Vagina (tissue), 2 donors: ENCODE measurements at regions of chr1 and their contacts with region 1.

Region 1: GRCh38 chr1:27862651-27863537 is 9.4 kb upstream of the THEMIS2 start:
- DNase-seq: no peak
- H3K4me3 ChIP-seq: no peak overlapping the region
- H3K27ac ChIP-seq: no peak overlapping the region
- H3K4me1 ChIP-seq: peaks cover 13% of the 10 kb centered on the region
- H3K27me3 ChIP-seq: no peaks in the 10 kb centered on the region
- CTCF ChIP-seq: no peak
- POLR2A ChIP-seq: no peak

Region 2: GRCh38 chr1:27589841-27590426 is 273.0 kb before region 1 on chr1:
- intact Hi-C with region 1: no loop called
- DNase-seq: no peak
- H3K4me3 ChIP-seq: no peak overlapping the region
- H3K27ac ChIP-seq: peak overlapping the region; percentile 97
- H3K4me1 ChIP-seq: peaks cover 73% of the 10 kb centered on the region
- H3K27me3 ChIP-seq: no peaks in the 10 kb centered on the region
- CTCF ChIP-seq: no peak
- POLR2A ChIP-seq: no peak

Region 3: DNA sequence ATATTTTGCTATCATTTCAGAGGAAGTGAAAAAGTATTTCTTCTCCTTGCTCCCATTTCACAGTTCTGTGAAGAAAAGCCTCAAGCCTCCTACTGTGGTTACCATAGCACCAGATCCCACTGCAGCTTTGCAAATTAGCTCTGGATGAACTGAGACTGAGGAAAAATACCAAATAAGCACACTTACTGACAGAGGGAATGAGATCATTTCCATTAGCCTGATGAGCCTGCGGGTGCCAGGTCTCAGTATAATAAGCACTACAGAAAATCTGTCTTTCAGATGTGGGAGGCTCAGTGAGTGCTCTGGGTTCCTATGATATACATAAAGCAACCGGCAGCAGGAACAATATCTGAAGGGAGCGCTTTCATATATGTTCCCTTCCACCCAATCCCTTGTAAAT is 118.3 kb after region 1 on chr1:
- intact Hi-C with region 1: loop called (anchors 10 kb)
- DNase-seq: no peak
- H3K4me3 ChIP-seq: no peak overlapping the region
- H3K27ac ChIP-seq: no peak overlapping the region
- H3K4me1 ChIP-seq: no peaks in the 10 kb centered on the region
- H3K27me3 ChIP-seq: no peaks in the 10 kb centered on the region
- CTCF ChIP-seq: no peak
- POLR2A ChIP-seq: no peak

Region 4: GRCh38 chr1:28028873-28029654 is 166.2 kb after region 1 on chr1:
- intact Hi-C with region 1: no loop called
- DNase-seq: no peak
- H3K4me3 ChIP-seq: no peak overlapping the region
- H3K27ac ChIP-seq: no peak overlapping the region
- H3K4me1 ChIP-seq: peaks cover 10% of the 10 kb centered on the region
- H3K27me3 ChIP-seq: no peaks in the 10 kb centered on the region
- CTCF ChIP-seq: no peak
- POLR2A ChIP-seq: no peak

Region 5: DNA sequence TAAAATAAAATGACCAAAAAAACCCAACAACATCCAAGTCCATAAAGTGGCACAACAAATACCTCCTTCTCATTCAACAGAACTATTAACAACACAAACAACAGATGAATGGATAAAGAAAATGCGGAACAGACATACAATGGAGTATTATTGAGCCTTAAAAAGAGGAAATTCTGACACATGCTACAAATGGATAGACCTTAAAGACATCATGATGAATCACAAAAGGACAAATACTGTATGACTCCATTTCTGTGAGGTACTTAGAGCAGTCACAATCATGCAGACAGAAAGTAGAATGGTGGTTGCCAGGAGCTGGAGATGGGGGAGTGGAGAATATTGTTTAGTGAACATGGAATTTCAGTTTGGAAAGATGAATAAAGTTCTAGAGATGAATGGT is 182.9 kb after region 1 on chr1:
- intact Hi-C with region 1: no loop called
- DNase-seq: no peak
- H3K4me3 ChIP-seq: no peak overlapping the region
- H3K27ac ChIP-seq: no peak overlapping the region
- H3K4me1 ChIP-seq: no peaks in the 10 kb centered on the region
- H3K27me3 ChIP-seq: no peaks in the 10 kb centered on the region
- CTCF ChIP-seq: no peak
- POLR2A ChIP-seq: no peak